ENCODE measurements at regions of chr4 and their contacts with region 1.

Region 1: DNA sequence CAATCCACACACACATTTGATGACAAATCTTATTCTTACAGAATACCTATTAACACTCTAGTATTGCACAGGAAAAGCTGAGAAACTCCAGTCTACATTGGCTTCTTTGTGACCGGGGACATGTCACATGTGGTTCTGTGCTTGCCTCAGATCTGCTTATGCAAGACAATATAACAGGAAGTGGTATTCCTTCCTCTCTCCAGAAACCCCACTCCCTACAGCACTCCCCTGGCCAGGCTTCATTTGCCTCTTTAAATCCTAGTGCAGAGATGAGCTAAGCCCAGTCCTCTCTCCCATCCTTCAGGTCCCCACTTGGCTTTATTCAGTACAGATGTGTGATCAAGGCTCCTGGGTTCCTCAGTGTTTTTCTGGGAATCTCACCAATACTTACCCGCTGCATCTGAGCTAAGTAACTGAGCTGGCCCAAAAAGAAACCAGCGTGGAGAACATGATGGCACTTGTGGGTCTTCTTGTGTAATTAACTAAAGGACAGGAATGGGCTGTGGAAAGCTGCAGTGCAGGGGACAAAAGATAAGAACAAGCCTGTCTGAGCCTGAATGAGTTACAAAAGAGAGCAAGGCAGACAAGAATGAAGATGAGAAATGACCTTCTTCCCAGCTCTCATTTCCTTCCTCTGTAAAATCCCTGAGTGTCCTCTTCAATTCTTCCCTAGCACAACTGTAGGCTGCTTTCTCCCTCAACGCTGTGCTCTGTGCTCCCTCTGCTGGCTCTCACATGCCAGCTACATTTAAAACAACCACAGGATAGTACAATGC is 105.6 kb downstream of the HNRNPD start:
- DNase-seq: peak; percentile 52
- ATAC-seq: peak; percentile 97
- H3K4me3 Mint-ChIP-seq: no peak overlapping the region
- H3K27ac Mint-ChIP-seq: peak overlapping the region; percentile 55
- H3K4me1 Mint-ChIP-seq: peaks cover 14% of the 10 kb centered on the region
- H3K27me3 Mint-ChIP-seq: peaks cover 6% of the 10 kb centered on the region
- CTCF ChIP-seq: peak; percentile 47; the same call in 1 of the 2 replicates

Region 2: GRCh38 chr4:81471588-81472288 is 796.5 kb before region 1 on chr4 and contains the start of gene RASGEF1B:
- CTCF ChIA-PET with region 1: interaction called, 17 read pairs
- POLR2A ChIA-PET with region 1: no interaction called
- DNase-seq: peak; percentile 67
- ATAC-seq: peak; percentile 75
- H3K4me3 Mint-ChIP-seq: peak within 1 kb of the TSS; percentile 78
- H3K27ac Mint-ChIP-seq: peak within 1 kb of the TSS; percentile 76
- H3K4me1 Mint-ChIP-seq: peaks cover 38% of the 10 kb centered on the region
- H3K27me3 Mint-ChIP-seq: peaks cover 18% of the 10 kb centered on the region
- CTCF ChIP-seq: no peak
- total RNA-seq, gene RASGEF1B: 3.8 to 6.9 TPM (median 4.0 TPM) in 3 replicates

Region 3: DNA sequence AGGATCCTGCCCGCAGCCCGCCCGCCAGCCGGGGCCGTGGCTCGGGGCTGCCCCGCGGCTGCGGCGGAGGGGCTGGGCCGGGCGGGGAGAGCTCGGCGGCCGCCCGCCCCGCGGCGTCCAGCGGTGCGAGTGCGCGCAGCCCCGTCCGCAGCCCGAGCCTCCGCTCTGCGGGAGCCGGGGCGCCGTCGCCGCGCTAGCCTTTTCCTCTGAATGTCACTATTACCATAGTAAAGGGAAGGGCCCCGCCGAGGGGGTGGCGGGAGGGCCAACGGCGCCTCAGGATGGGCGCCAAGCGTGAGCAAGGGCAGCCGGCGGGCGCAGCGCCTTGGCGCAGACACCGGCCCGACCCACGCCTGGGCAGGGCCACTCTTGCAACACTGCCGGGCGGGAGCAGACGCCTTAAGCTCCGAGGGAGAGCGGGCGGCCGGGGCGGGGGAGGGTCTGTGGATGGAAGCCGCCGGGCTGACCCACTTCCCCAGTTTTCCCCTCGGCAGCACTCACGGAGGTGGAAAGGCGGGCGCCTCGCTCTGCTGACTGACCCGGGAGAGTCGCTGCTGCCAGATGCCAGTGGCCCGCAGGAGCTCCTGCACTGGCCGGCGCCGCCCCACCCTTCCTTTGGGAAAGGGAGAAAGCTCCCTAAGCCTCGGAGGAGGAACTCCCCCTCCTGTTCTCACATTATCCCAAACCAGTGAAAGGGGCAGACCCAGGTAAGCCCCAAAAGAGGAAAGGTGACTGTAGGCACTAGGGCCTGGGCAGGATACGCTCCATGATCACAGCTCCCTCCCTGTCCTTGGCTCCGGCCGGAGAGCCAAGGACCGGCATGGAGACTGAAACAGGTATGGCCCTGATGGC is 223.9 kb before region 1 on chr4:
- CTCF ChIA-PET with region 1: interaction called, 13 read pairs
- POLR2A ChIA-PET with region 1: no interaction called
- DNase-seq: peak; percentile 80
- ATAC-seq: peak; percentile 79
- H3K4me3 Mint-ChIP-seq: peak overlapping the region; percentile 81
- H3K27ac Mint-ChIP-seq: no peak overlapping the region
- H3K4me1 Mint-ChIP-seq: peaks cover 25% of the 10 kb centered on the region
- H3K27me3 Mint-ChIP-seq: peaks cover 37% of the 10 kb centered on the region
- CTCF ChIP-seq: no peak

Region 4: GRCh38 chr4:82248903-82249632 is 19.2 kb before region 1 on chr4:
- CTCF ChIA-PET with region 1: interaction called, 23 read pairs
- POLR2A ChIA-PET with region 1: no interaction called
- DNase-seq: no peak
- ATAC-seq: no peak
- H3K4me3 Mint-ChIP-seq: no peak overlapping the region
- H3K27ac Mint-ChIP-seq: no peak overlapping the region
- H3K4me1 Mint-ChIP-seq: peaks cover 23% of the 10 kb centered on the region
- H3K27me3 Mint-ChIP-seq: no peaks in the 10 kb centered on the region
- CTCF ChIP-seq: no peak

Region 5: DNA sequence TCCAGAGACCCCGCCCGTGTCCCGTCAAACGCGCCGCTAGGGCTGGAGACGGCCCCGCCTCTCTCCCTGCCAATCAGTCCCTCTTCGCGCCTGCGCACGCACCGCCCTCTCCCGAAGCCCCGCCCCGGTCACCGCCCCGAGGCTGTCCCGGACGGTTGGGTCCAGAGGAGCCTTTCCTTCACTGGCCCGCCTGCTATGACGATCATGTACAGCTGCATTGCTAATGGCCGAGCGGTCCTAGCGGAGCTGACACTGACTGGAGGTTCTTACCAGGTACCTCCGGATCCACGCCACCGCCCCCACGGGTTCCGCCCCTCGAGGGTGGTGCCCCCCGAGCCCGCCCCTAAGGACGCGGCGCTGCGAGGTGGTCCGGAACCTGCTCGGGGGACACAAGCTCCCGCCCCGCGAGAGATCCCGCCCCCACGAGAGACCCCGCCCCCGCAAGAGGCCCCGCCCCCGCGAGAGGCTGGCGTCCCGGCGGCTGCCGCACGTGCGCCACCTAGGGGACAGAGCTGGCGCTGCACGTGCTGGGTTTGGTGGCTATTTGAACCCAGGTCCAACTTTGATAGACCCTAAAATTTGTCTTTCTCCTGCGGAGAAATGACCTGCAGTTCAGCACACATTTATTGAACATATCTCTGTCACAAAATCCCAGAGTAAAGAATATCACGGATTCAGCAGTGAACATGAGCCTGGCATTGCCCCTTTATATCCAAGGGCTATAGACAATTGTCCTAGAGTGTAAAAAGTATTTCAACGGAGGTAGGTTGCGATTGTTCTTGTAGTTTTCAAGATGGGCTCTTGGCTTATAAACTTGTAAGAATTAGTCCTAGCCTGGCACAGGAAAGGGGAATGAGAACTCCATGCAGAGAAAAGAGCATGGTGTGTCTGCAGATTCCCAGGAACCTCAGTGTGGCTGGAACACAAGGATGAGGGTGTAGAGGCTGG is 16.9 kb after region 1 on chr4:
- CTCF ChIA-PET with region 1: interaction called, 101 read pairs
- POLR2A ChIA-PET with region 1: interaction called, 3 read pairs
- DNase-seq: peak; percentile 100
- ATAC-seq: peak; percentile 99
- H3K4me3 Mint-ChIP-seq: peak overlapping the region; percentile 68
- H3K27ac Mint-ChIP-seq: peak overlapping the region; percentile 31; the same call in 1 of the 2 replicates
- H3K4me1 Mint-ChIP-seq: peaks cover 14% of the 10 kb centered on the region
- H3K27me3 Mint-ChIP-seq: peaks cover 20% of the 10 kb centered on the region
- CTCF ChIP-seq: peak; percentile 94

Region 6: DNA sequence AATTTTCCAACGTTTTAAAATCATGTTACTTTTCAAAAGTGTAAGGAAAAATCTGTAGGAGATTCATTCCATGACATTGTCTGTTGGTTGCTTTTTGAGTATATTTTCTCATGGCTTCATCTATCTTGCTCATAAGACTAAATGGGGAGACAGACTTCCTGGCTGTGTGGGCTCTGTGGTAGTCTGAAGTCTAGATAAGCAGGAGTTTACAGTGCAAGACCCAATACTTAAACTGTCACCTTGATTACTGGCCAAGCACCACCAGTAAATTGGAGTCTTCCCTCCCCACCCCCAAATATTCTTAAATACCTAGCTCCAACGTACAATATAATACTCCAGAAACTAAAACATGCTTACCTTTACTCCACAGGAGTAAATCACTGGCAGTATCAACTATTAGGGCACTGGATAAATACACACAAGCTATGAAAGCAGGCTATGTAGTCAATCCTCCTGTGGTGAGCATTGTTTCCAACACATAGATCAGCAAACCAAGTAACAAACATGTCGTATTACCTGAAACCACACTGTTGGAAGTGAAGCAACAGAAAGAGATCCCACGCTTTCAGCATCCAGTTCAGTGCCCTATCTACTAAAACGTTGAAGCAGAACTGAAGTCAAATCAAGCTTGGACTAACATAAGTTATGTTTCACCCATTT is 99.3 kb after region 1 on chr4:
- CTCF ChIA-PET with region 1: no interaction called
- POLR2A ChIA-PET with region 1: no interaction called
- DNase-seq: no peak
- ATAC-seq: no peak
- H3K4me3 Mint-ChIP-seq: peak overlapping the region; percentile 3
- H3K27ac Mint-ChIP-seq: peak overlapping the region; percentile 83
- H3K4me1 Mint-ChIP-seq: peaks cover 71% of the 10 kb centered on the region
- H3K27me3 Mint-ChIP-seq: no peaks in the 10 kb centered on the region
- CTCF ChIP-seq: no peak

Region 7: DNA sequence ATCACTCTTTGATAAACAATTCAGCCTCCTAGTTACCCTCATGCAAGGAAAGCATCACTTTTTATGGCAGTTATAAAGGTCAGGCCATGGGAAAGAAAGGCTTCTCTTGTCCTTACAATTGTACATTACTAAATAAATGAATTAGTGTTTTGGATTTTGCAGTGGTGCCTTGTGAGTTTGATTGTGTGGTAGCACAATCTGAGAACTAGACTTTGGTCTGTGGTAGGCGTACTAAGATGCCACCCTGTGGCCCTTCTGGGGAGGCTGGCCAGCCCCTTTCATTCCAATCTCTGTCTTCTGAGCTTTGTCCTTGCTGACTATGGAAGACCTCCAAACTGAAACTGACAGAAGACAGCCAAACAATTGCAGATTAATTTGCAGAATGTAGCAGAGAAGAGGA is 120.2 kb after region 1 on chr4:
- CTCF ChIA-PET with region 1: no interaction called
- POLR2A ChIA-PET with region 1: no interaction called
- DNase-seq: no peak
- ATAC-seq: peak; percentile 44; the same call in 1 of the 2 replicates
- H3K4me3 Mint-ChIP-seq: no peak overlapping the region
- H3K27ac Mint-ChIP-seq: no peak overlapping the region
- H3K4me1 Mint-ChIP-seq: peaks cover 8% of the 10 kb centered on the region
- H3K27me3 Mint-ChIP-seq: peaks cover 9% of the 10 kb centered on the region
- CTCF ChIP-seq: no peak